ENCODE measurements at regions of chr14 and their contacts with region 1.

Region 1: DNA sequence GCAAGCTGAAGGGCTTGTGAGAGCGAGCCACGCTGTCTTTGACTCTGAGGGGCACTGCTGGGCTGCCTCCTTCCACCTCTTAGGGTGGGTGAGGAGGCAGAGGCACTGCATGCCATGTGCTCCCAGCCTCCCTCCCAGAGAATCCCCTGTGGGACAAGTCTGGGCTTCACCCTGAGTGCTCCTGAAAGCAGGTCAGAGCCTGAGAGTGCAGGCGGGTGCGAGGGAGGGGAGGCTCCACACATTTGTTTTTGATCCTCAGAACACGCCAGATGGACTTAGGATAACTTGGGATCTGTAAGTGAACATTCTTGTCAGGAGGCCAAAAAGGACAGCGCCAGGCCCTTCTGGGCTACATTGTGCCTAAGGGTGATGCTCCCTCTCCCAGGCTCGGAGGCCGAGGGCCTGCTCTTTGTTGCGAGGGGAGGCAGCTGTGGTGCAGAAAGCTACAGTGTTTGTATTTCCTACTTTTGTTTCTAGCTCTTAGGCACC is 155.4 kb downstream of the TMX1 start:
- DNase-seq: peak; percentile 91
- H3K4me3 ChIP-seq: peak overlapping the region in 1 of 3 experiments; percentile 26
- H3K27ac ChIP-seq: peak overlapping the region; percentile 99
- H3K4me1 ChIP-seq: peaks cover 52% of the 10 kb centered on the region
- H3K27me3 ChIP-seq: no peaks in the 10 kb centered on the region
- CTCF ChIP-seq: no peak
- POLR2A ChIP-seq: no peak

Region 2: GRCh38 chr14:51276605-51277004 is 118.8 kb before region 1 on chr14:
- CTCF ChIA-PET with region 1: no interaction called
- POLR2A ChIA-PET with region 1: no interaction called
- dilution Hi-C with region 1: no loop called
- intact Hi-C with region 1: no loop called
- DNase-seq: no peak
- H3K4me3 ChIP-seq: no peak overlapping the region
- H3K27ac ChIP-seq: no peak overlapping the region
- H3K4me1 ChIP-seq: no peaks in the 10 kb centered on the region
- H3K27me3 ChIP-seq: no peaks in the 10 kb centered on the region
- CTCF ChIP-seq: no peak
- POLR2A ChIP-seq: no peak

Region 3: GRCh38 chr14:51442513-51443175 is 47.2 kb after region 1 on chr14:
- CTCF ChIA-PET with region 1: no interaction called
- POLR2A ChIA-PET with region 1: interaction called, 6 read pairs
- dilution Hi-C with region 1: no loop called
- intact Hi-C with region 1: loop called (anchors 1 kb)
- DNase-seq: peak; percentile 86
- H3K4me3 ChIP-seq: no peak overlapping the region
- H3K27ac ChIP-seq: peak overlapping the region; percentile 92
- H3K4me1 ChIP-seq: peaks cover 37% of the 10 kb centered on the region
- H3K27me3 ChIP-seq: no peaks in the 10 kb centered on the region
- CTCF ChIP-seq: no peak
- POLR2A ChIP-seq: no peak

Region 4: GRCh38 chr14:51539571-51540037 is 144.2 kb after region 1 on chr14:
- CTCF ChIA-PET with region 1: interaction called, 3 read pairs
- POLR2A ChIA-PET with region 1: interaction called, 12 read pairs
- dilution Hi-C with region 1: no loop called
- intact Hi-C with region 1: loop called (anchors 1 kb)
- DNase-seq: peak; percentile 82
- H3K4me3 ChIP-seq: no peak overlapping the region
- H3K27ac ChIP-seq: peak overlapping the region; percentile 96
- H3K4me1 ChIP-seq: peaks cover 28% of the 10 kb centered on the region
- H3K27me3 ChIP-seq: no peaks in the 10 kb centered on the region
- CTCF ChIP-seq: no peak
- POLR2A ChIP-seq: no peak

Region 5: DNA sequence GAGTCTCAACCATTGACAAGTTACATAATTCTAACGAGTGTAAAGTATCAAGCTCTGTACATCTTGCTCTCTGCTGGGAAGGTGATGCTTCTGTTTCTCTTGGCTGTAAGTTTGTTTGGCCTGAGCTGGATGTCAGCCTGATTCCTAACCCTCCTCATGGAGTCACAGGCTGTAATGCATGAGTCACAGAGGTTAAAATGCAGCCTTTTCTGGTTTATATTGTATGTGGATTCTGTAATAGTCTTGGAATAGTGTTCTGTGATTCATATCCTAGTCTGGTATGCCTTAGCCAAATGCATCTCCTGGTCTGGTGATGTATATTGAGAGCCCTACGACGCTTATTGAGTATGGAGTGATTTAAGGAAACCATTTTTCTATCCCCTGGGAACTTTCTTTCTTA is 151.9 kb after region 1 on chr14:
- CTCF ChIA-PET with region 1: interaction called, 7 read pairs
- POLR2A ChIA-PET with region 1: interaction called, 8 read pairs
- dilution Hi-C with region 1: no loop called
- intact Hi-C with region 1: loop called (anchors 1 kb)
- DNase-seq: peak; percentile 99
- H3K4me3 ChIP-seq: no peak overlapping the region
- H3K27ac ChIP-seq: peak overlapping the region; percentile 96
- H3K4me1 ChIP-seq: peaks cover 32% of the 10 kb centered on the region
- H3K27me3 ChIP-seq: no peaks in the 10 kb centered on the region
- CTCF ChIP-seq: no peak
- POLR2A ChIP-seq: peak; percentile 80

Region 6: DNA sequence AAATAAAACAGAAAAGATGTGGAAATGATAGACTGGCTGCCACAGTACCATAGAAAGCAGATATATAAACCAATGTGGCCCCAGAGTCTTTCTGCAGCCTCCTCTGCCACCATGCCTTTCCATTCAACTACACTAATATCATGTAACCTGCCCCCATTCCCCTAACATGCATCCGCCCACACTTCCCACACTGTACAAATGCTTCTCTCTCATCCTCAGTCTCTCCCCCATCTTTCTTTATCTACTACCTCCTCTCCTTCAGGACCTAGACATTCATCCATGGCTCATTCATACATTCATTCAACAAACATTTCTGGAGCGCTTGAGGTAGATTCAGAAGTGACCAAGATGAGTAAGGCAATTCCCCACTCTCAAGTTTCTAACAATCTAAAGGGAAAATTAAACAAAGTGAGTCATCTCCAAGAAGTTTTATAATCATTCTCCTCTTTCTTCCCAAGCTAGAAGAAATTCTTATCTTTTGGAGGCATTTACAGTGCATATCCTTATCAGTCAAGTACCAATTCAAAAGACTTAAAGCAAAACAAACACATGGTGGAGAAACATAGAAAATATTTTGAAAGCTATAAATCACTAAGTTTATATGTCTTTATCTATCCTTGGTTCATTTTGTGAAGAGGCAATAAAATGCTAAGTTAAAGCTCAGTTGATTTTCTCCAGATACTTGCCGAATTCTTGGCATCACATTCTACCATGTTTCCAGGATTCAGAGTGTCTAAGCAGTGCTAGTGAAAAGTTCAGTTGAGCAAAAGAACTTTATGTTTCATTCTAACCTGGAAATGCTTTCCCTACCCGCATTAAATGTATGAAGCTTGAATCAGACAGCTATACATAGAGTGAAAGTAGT is 185.8 kb after region 1 on chr14:
- CTCF ChIA-PET with region 1: no interaction called
- POLR2A ChIA-PET with region 1: interaction called, 3 read pairs
- dilution Hi-C with region 1: no loop called
- intact Hi-C with region 1: loop called (anchors 1 kb)
- DNase-seq: peak; percentile 86
- H3K4me3 ChIP-seq: no peak overlapping the region
- H3K27ac ChIP-seq: peak overlapping the region; percentile 62
- H3K4me1 ChIP-seq: peaks cover 41% of the 10 kb centered on the region
- H3K27me3 ChIP-seq: no peaks in the 10 kb centered on the region
- CTCF ChIP-seq: no peak
- POLR2A ChIP-seq: peak; percentile 24

Region 7: DNA sequence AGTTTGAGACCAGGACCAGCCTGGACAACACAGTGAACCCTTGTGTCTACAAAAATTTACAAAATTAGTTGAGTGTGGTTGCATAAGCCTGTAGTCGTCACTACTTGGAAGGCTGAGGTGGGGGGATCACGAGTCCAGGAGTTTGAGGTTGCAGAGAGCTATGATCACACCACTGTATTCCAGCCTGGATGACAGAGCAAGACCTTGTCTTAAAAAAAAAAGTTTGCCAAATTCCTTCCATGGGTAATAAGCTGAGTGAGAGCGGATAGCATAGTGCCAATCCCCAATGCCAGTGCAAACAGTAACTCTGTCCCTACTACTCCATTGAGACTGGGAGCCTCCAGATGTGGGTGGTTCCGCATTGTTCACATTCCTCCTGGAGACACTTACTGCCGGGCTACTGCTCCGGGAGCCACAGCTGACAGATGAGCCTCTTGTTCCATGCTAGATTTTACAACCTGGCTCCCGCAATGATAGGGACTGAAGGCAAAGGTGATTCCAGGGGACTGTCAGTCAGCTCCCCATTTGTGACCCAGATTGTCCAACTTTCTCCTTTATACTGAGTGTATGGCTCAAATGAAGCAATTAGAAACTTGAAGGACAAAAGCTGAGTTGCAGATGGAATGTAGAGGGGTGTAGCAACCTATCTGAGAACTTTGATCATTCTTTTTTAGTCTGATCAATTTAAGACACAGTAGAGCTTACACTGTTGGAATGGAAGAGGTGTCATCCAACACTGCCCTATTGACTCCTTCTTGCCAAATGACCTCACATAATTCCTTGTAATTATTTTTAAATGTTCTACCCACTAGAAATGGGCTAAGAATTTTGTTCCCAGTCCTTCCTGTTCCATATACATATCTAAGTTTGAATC is 242.9 kb after region 1 on chr14:
- CTCF ChIA-PET with region 1: interaction called, 3 read pairs
- POLR2A ChIA-PET with region 1: no interaction called
- dilution Hi-C with region 1: no loop called
- intact Hi-C with region 1: loop called (anchors 1 kb)
- DNase-seq: no peak
- H3K4me3 ChIP-seq: no peak overlapping the region
- H3K27ac ChIP-seq: peak overlapping the region; percentile 4
- H3K4me1 ChIP-seq: peaks cover 13% of the 10 kb centered on the region
- H3K27me3 ChIP-seq: no peaks in the 10 kb centered on the region
- CTCF ChIP-seq: no peak
- POLR2A ChIP-seq: no peak

Region 8: GRCh38 chr14:51780006-51780692 is 384.7 kb after region 1 on chr14:
- CTCF ChIA-PET with region 1: interaction called, 3 read pairs
- POLR2A ChIA-PET with region 1: no interaction called
- dilution Hi-C with region 1: no loop called
- intact Hi-C with region 1: loop called (anchors 10 kb)
- DNase-seq: peak; percentile 67
- H3K4me3 ChIP-seq: no peak overlapping the region
- H3K27ac ChIP-seq: no peak overlapping the region
- H3K4me1 ChIP-seq: peaks cover 3% of the 10 kb centered on the region
- H3K27me3 ChIP-seq: peaks cover 18 to 38% of the 10 kb centered on the region in 2 experiments
- CTCF ChIP-seq: peak; percentile 66 to 78
- POLR2A ChIP-seq: no peak